ENCODE measurements at regions of chr17 and their contacts with region 1.

Region 1: GRCh38 chr17:7177196-7177953 is 1.8 kb downstream of the ASGR1 start:
- DNase-seq: peak; percentile 59 to 83 (median 81)
- ATAC-seq: peak; percentile 77
- H3K4me3 ChIP-seq: peak overlapping the region; percentile 29
- H3K27ac ChIP-seq: no peak overlapping the region
- H3K4me1 ChIP-seq: no peaks in the 10 kb centered on the region
- H3K27me3 ChIP-seq: no peaks in the 10 kb centered on the region

Region 2: GRCh38 chr17:7004398-7005253 is 172.7 kb before region 1 on chr17:
- intact Hi-C with region 1: no loop called
- DNase-seq: peak in 1 of 3 donors; percentile 62
- ATAC-seq: peak; percentile 61 to 70
- H3K4me3 ChIP-seq: no peak overlapping the region
- H3K27ac ChIP-seq: no peak overlapping the region
- H3K4me1 ChIP-seq: no peaks in the 10 kb centered on the region
- H3K27me3 ChIP-seq: no peaks in the 10 kb centered on the region

Region 3: DNA sequence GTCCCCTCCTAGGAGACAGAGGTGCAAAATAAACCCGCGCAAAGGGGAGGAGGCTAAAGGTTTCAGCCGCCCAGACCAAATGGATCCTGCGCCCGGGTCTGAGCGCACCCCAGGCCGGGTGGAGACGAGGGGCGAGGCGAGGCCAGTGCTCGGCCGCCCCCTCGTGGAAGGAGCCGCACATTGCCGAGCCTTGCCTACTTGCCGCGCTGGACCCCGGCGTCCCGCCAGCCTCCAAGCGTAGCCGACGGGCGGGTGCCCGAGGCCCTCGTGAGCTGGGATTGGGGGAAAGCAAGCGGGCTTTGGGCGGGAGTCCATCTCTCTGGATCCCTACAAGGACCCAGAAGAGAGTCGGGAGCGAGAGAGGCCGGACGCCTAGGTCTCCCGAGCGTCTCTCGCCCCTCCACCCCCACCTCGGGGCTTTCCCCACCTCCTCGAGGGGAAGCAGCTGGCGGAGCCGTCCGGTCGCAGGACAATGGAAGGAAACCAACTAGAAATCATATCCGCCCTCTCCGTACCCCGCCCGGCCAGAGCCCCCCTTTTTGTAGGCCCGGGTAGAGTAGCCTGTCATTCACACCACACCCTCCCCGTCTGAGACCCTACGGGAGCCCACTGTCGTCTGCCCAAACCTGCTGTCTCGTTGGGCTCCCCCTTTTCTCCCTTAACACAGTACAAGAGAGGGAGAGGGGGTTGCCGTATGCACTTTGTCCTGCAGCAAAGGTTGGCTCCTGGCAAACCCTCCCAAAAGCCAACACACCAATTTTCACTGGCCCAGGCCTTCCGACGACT is 155.2 kb before region 1 on chr17:
- intact Hi-C with region 1: no loop called
- DNase-seq: peak; percentile 86 to 95 (median 94)
- ATAC-seq: peak; percentile 67 to 71
- H3K4me3 ChIP-seq: peak overlapping the region; percentile 21
- H3K27ac ChIP-seq: peak overlapping the region; percentile 85
- H3K4me1 ChIP-seq: peaks cover 5% of the 10 kb centered on the region
- H3K27me3 ChIP-seq: no peaks in the 10 kb centered on the region

Region 4: GRCh38 chr17:7045909-7046724 is 131.3 kb before region 1 on chr17:
- intact Hi-C with region 1: loop called in 2 of 4 experiments (anchors 5 kb)
- DNase-seq: peak in 1 of 3 donors; percentile 66
- ATAC-seq: no peak
- H3K4me3 ChIP-seq: peak overlapping the region; percentile 4
- H3K27ac ChIP-seq: no peak overlapping the region
- H3K4me1 ChIP-seq: peaks cover 5% of the 10 kb centered on the region
- H3K27me3 ChIP-seq: no peaks in the 10 kb centered on the region